ENCODE measurements at regions of chr11 and their contacts with region 1.

Region 1: DNA sequence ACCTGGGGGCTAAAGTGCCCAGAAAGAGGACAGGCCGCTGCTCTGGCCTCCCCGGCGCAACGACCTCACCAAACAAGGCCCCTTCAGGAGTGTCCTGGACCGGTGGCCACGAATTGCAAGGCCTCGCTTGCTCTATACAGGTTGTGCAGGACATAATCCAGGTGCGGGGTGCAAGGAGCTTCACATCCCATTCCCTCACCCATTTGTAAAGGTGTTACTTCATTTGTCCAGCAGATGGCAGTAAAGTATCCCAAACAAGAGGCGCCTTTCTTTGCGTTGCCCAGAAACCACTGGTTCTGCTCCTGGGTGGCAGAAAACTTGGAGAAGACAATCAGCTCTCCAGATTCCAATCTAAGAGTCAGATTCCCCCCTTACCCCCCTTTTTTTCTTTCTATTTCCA is 35.9 kb upstream of the PRDM11 start:
- DNase-seq: peak; percentile 48
- ATAC-seq: peak; percentile 67
- H3K4me3 Mint-ChIP-seq: no peak overlapping the region
- H3K27ac Mint-ChIP-seq: no peak overlapping the region
- H3K4me1 Mint-ChIP-seq: no peaks in the 10 kb centered on the region
- H3K27me3 Mint-ChIP-seq: peaks cover 27% of the 10 kb centered on the region
- CTCF ChIP-seq: peak; percentile 78

Region 2: DNA sequence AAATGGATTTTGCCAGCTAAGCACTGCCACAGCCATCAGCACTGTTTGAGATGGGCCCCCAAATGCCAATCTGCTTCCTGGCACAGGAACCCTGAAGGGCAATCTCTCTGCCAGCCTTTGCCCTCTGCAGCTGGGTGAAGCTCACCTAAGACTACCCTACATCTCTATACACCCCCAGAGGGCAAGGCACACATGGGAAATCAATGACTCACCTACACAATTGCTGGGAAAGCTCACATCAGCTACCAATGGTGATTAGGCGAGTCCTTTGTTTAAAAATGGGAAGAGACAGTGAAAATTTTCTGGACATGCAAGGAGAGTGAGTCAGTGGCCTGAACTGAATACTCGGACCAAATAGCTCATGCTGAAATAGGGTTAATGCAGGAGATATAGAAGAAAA is 23.3 kb after region 1 on chr11:
- CTCF ChIA-PET with region 1: interaction called, 16 read pairs
- POLR2A ChIA-PET with region 1: interaction called, 3 read pairs
- intact Hi-C with region 1: no loop called
- DNase-seq: no peak
- ATAC-seq: no peak
- H3K4me3 Mint-ChIP-seq: no peak overlapping the region
- H3K27ac Mint-ChIP-seq: no peak overlapping the region
- H3K4me1 Mint-ChIP-seq: no peaks in the 10 kb centered on the region
- H3K27me3 Mint-ChIP-seq: peaks cover 29% of the 10 kb centered on the region
- CTCF ChIP-seq: no peak

Region 3: GRCh38 chr11:45233121-45233803 is 122.7 kb after region 1 on chr11:
- CTCF ChIA-PET with region 1: interaction called, 14 read pairs
- POLR2A ChIA-PET with region 1: no interaction called
- intact Hi-C with region 1: no loop called
- DNase-seq: peak; percentile 79
- ATAC-seq: peak; percentile 99
- H3K4me3 Mint-ChIP-seq: no peak overlapping the region
- H3K27ac Mint-ChIP-seq: no peak overlapping the region
- H3K4me1 Mint-ChIP-seq: no peaks in the 10 kb centered on the region
- H3K27me3 Mint-ChIP-seq: peaks cover 15% of the 10 kb centered on the region
- CTCF ChIP-seq: peak; percentile 79

Region 4: GRCh38 chr11:45285930-45286632 is 175.5 kb after region 1 on chr11 and contains the start of gene SYT13:
- CTCF ChIA-PET with region 1: interaction called, 35 read pairs
- POLR2A ChIA-PET with region 1: no interaction called
- intact Hi-C with region 1: no loop called
- DNase-seq: no peak
- ATAC-seq: no peak
- H3K4me3 Mint-ChIP-seq: no peak within 1 kb of the TSS
- H3K27ac Mint-ChIP-seq: no peak within 1 kb of the TSS
- H3K4me1 Mint-ChIP-seq: no peaks in the 10 kb centered on the region
- H3K27me3 Mint-ChIP-seq: peaks cover 61% of the 10 kb centered on the region
- CTCF ChIP-seq: no peak
- total RNA-seq, gene SYT13: not detected

Region 5: GRCh38 chr11:45305874-45306623 is 195.5 kb after region 1 on chr11:
- CTCF ChIA-PET with region 1: interaction called, 10 read pairs
- POLR2A ChIA-PET with region 1: no interaction called
- intact Hi-C with region 1: no loop called
- DNase-seq: no peak
- ATAC-seq: no peak
- H3K4me3 Mint-ChIP-seq: no peak overlapping the region
- H3K27ac Mint-ChIP-seq: no peak overlapping the region
- H3K4me1 Mint-ChIP-seq: no peaks in the 10 kb centered on the region
- H3K27me3 Mint-ChIP-seq: no peaks in the 10 kb centered on the region
- CTCF ChIP-seq: no peak

Region 6: DNA sequence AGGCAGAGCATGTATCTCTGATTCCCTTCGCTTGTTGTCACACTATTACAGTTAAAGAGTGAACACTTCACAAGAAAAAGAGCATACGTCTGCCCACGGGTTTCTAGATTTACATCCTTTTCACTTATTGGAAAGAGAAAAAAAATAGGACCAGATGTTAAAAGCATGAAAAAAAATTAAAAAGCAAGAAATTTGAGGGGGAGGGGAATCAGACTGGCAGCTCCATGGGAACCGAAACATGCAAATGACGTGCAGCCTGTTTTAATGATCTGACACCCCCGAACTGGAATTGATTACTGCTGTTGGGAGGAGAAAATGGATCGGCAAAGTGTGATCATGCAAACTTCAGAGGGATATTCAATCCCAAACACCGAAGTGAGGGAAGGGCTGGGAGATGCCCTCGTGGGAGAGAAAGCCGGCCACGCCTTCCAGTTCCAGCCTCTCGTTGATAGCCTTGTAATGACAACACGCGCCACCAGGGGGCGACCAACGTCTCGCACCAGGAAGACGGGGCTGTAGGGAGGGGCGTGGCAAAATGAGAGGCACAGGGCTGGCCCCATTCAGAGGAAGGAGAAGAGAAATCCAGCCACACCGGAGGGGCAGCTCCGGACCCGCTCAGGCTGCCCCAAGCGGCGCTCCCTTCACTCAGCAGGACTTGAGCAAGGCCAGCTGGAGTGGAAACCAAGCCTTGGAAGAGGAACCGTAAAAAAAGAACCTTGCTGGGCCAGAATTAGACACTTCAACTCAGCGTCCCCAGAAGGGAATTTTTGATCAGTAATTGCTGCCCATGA is 229.4 kb after region 1 on chr11:
- CTCF ChIA-PET with region 1: interaction called, 30 read pairs
- POLR2A ChIA-PET with region 1: no interaction called
- intact Hi-C with region 1: no loop called
- DNase-seq: peak; percentile 98
- ATAC-seq: peak; percentile 100
- H3K4me3 Mint-ChIP-seq: peak overlapping the region; percentile 55
- H3K27ac Mint-ChIP-seq: no peak overlapping the region
- H3K4me1 Mint-ChIP-seq: peaks cover 10% of the 10 kb centered on the region
- H3K27me3 Mint-ChIP-seq: peaks cover 10% of the 10 kb centered on the region
- CTCF ChIP-seq: peak; percentile 89

Measured in activated CD8-positive, alpha-beta T cell treated with anti-CD3 and anti-CD28 coated beads for 36 hours (primary cell).